AG04449 (cell line): ENCODE measurements at regions of chr1 and their contacts with region 1.

Region 1: DNA sequence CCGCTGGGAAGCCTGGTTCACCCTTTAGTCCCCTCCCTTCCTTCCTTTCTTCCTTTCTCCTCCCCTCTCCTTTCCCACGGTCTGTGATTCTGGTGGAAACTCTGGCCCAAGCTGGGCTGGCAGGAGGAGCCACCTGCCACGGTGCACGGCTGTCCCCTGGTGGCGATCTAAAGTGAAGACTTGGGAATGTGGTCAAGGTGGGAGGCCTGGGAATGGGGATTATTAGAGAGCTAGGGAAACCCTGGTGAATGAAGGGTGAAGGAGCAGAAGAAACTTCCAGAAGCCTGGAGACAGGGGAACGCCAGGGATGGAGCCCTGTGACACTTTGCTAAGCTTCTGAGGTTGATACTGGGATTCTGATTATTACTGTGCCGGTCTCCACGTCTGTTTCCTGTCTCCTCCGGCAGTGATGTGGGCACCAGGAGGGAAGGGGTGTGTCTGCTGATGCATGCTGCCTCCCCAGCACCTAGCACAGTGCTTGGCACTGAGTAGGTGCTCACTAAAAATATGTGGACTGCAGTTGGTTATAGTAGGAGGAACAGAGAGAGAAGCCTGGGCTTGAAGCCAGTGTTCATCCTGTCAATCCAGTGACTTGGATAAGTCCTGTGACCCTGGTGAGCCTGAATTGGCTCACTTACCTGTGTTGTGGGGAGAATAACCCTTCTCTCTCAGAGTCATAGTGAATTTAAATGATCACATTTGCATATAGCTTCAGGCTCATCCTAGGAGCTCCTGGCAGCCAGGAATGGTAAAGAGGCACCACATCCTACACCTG is 71.2 kb upstream of the NBPF3 start:
- DNase-seq: no peak
- H3K4me3 ChIP-seq: no peak overlapping the region
- CTCF ChIP-seq: peak; percentile 96

Region 2: DNA sequence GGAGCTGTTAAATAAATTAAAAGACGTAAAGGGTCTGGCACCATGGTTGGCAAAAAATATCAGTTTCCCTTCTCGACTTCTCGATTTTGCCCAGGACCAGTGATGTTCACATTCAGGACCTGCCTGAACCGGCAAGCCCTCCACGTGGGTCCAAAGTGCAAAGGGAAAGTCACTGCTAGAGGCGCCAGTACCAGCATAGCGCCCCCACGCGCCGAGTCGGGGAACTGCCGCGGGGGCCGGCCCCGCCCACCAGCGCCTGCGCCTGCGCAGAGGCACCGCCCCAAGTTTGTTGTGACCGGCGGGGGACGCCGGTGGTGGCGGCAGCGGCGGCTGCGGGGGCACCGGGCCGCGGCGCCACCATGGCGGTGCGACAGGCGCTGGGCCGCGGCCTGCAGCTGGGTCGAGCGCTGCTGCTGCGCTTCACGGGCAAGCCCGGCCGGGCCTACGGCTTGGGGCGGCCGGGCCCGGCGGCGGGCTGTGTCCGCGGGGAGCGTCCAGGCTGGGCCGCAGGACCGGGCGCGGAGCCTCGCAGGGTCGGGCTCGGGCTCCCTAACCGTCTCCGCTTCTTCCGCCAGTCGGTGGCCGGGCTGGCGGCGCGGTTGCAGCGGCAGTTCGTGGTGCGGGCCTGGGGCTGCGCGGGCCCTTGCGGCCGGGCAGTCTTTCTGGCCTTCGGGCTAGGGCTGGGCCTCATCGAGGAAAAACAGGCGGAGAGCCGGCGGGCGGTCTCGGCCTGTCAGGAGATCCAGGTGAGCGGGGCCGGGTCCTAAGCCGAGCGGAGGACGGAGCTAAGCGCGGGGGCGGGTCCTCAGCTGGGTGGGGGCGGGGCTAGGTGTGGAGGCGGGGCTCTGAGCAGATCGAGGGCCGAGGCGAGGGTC is 735.3 kb before region 1 on chr1 and contains the start of gene PINK1:
- CTCF ChIA-PET with region 1: no interaction called
- POLR2A ChIA-PET with region 1: no interaction called
- DNase-seq: no peak
- H3K4me3 ChIP-seq: peak within 1 kb of the TSS; percentile 79
- CTCF ChIP-seq: peak; percentile 94

Region 3: GRCh38 chr1:21225065-21225464 is 143.6 kb before region 1 on chr1:
- CTCF ChIA-PET with region 1: interaction called, 405 read pairs
- POLR2A ChIA-PET with region 1: no interaction called
- DNase-seq: no peak
- H3K4me3 ChIP-seq: no peak overlapping the region
- CTCF ChIP-seq: no peak

Region 4: DNA sequence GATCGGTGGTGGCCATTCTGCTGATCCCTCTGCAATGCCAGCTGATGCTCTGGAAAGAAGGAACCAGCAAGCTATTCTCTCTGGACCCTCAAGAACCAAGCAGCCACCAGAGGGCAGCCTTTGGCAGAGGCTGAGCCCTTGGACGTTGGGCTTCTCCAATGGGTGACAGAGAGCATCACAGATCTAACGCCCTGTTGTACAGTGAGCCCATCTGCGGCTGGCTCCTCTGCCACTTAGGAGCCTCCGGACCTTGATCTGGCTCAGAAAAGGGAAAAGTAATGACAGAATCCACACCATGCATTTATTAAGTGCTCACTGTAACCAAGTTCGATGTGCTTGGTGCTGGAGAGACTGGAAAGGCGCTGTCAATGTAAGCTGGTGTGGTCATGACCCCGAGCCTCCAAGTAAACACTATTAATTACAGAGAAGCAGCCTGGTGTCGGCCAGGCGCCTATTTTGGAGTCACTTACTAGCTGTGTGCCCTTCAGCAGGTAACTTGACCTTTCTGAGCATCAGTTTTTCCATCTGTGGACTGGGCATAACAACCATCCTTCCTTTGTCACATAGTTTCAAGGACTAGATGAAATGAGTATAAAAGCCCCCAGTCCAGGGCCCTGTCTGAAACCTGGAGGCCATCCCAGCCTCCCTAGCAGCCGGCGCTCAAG is 113.3 kb before region 1 on chr1:
- CTCF ChIA-PET with region 1: interaction called, 381 read pairs
- POLR2A ChIA-PET with region 1: no interaction called
- DNase-seq: no peak
- H3K4me3 ChIP-seq: no peak overlapping the region
- CTCF ChIP-seq: peak; percentile 91

Region 5: GRCh38 chr1:21355956-21356355 is 12.7 kb before region 1 on chr1:
- CTCF ChIA-PET with region 1: interaction called, 45 read pairs
- POLR2A ChIA-PET with region 1: no interaction called
- DNase-seq: no peak
- H3K4me3 ChIP-seq: no peak overlapping the region
- CTCF ChIP-seq: no peak

Region 6: DNA sequence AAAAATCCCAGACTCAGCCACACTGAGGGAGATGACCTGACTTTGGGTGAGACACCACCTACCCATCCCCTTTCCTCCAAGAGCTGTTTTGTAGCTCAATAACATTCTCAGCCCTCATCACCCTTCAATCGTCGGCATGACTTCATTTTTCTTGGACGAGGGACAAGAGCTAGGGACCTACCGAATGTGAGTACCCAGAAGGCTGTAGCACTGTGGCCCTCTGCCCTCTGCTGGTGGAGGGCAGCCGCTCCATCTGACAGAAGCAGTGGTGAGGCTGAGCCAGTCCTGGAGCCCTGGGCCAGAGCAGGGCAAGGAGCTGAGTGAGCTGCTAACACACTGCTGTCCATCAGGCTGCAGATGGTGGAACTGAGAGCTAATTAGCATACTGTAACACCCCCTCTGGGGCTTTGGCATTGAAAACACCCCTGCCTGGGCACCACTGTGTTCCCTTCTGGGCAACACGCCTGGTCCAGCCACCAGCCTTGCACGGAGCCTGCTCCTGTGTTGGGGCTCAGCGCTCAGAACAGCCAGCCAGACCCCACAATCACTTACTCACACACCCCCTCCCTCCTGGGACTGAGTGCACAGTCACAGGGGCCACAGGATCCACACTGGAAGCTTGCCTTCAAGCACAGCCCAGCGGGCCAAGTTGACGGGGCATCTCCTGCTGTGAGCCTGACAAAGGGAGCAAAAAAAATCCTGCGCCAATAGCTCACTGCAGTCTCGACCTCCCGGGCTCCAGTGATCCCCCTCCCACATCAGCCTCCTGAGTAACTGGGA is 122.3 kb after region 1 on chr1:
- CTCF ChIA-PET with region 1: interaction called, 116 read pairs
- POLR2A ChIA-PET with region 1: no interaction called
- DNase-seq: no peak
- H3K4me3 ChIP-seq: no peak overlapping the region
- CTCF ChIP-seq: peak; percentile 81

Region 7: GRCh38 chr1:21573971-21574465 is 205.3 kb after region 1 on chr1:
- CTCF ChIA-PET with region 1: interaction called, 147 read pairs
- POLR2A ChIA-PET with region 1: no interaction called
- DNase-seq: no peak
- H3K4me3 ChIP-seq: no peak overlapping the region
- CTCF ChIP-seq: peak; percentile 60